AG04449 (cell line): ENCODE measurements at regions of chr1 and their contacts with region 1.

Region 1: DNA sequence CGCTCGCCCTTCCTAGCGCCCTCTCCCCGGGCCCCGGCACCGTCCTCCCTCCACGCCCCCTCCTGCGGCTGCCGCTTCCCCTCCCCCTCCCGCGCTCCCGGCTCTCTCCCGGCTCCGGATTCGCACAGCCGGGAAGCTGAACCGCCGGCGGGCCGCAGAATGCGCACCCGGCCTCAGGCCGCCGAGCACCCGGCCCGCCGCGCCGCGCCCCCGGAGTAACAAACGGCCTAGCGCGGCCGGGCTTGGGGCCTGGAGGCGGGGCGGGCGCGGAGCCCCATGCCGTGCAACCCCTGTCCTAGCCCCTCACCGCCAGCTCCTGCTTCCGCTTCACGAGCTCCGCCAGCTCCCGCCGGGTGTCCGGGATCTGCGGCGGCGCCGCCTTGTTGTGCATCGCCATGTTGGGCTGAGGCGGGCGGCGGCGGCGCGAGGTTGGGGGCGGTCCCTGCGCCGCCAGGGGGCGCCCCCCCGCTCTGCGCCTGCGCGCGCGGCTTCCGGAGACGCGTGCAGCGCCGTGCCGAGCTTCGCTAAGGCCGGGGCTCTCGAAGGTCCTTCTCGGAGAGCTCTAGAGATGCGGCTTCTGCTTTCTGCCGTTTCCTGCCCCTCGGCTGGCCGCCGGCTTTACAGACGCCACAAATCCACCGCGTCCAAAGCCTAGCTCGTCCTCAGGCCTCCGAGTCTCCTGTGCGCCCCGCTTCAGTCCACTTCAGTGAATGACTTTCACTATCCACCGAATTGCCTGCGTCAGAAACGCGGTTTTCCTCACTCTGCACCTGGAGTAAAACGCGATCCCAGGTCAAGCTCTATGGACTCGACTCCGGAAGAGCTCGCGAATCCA is at the start of gene MEAF6:
- DNase-seq: no peak
- H3K4me3 ChIP-seq: peak within 1 kb of the TSS; percentile 81
- CTCF ChIP-seq: peak; percentile 49

Region 2: DNA sequence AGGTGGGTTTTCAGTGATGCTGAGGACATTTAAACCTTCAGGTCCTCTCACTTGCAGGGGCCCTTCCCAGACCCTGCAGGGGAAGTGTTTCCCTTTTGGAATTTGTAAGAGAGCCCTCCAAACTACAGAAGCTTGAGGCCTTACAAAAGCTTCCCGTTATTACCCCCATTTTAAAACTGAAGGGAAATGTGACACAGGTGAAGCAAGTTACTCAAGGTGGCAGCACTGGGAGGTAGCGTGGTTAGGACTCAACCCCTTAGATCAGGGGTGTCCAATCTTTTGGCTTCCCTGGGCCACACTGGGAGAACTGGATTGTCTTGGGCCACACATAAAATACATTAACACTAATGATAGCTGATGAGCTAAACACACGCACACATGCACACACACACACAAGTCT is 56.0 kb before region 1 on chr1:
- CTCF ChIA-PET with region 1: interaction called, 28 read pairs
- POLR2A ChIA-PET with region 1: no interaction called
- DNase-seq: no peak
- H3K4me3 ChIP-seq: no peak overlapping the region
- CTCF ChIP-seq: no peak

Region 3: DNA sequence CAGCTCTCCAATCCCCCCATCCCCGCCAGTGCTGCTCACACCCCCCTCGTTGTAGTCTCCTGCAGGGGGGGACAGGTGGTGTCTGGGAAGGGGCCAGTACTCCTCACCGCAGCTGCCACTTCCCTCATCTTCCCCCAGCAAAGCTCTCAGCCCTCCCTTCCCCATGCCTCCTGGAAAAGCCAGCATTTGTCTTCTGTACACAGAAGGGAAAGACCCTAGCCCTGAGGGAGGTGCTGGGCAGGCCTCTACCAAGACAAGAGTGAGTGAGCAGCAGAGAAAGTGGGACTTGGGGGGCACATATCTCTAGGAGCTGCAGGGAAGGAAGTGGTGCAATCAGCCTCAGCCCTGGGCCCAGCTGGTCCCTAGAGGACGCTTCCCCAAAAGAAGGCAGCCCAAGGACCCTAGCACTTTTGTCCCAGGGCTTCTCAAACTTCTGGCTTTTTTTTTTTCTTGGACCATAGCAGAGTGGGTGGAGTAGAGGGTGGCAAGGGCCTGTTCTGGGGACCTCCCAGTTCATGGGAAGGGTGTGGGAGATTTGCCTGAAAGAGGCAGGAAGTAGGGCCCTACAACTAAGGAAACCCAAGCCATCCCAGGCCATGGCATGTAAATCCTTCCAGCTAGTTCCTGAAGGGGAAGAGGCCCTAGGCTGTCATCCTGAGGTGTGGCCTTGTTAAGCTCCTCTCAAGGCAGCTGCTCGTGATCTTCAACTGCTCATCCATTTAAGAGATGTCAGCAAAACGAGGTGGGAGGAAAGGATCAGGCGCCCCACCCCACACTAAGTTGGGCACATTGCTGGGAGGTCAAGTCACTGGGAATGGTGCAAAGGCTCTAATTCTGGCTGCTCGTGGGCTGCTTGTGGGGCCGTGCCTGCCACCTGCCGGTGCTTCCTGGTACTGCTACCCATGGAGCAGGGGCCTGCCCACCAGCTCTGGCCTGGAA is 27.6 kb before region 1 on chr1:
- CTCF ChIA-PET with region 1: interaction called, 34 read pairs
- POLR2A ChIA-PET with region 1: no interaction called
- DNase-seq: no peak
- H3K4me3 ChIP-seq: no peak overlapping the region
- CTCF ChIP-seq: peak; percentile 98

Region 4: GRCh38 chr1:37537378-37537777 is 22.8 kb after region 1 on chr1:
- CTCF ChIA-PET with region 1: interaction called, 22 read pairs
- POLR2A ChIA-PET with region 1: no interaction called
- DNase-seq: peak; percentile 34
- H3K4me3 ChIP-seq: no peak overlapping the region
- CTCF ChIP-seq: no peak

Region 5: GRCh38 chr1:37574834-37575480 is 60.4 kb after region 1 on chr1:
- CTCF ChIA-PET with region 1: interaction called, 13 read pairs
- POLR2A ChIA-PET with region 1: interaction called, 3 read pairs
- DNase-seq: peak; percentile 65
- H3K4me3 ChIP-seq: no peak overlapping the region
- CTCF ChIP-seq: no peak